Cardiac septum (tissue), 1 donor: ENCODE measurements at regions of chr7 and their contacts with region 1.

Region 1: GRCh38 chr7:149742075-149742701 is 31.2 kb downstream of the ZNF467 start:
- DNase-seq: peak; percentile 87

Region 2: DNA sequence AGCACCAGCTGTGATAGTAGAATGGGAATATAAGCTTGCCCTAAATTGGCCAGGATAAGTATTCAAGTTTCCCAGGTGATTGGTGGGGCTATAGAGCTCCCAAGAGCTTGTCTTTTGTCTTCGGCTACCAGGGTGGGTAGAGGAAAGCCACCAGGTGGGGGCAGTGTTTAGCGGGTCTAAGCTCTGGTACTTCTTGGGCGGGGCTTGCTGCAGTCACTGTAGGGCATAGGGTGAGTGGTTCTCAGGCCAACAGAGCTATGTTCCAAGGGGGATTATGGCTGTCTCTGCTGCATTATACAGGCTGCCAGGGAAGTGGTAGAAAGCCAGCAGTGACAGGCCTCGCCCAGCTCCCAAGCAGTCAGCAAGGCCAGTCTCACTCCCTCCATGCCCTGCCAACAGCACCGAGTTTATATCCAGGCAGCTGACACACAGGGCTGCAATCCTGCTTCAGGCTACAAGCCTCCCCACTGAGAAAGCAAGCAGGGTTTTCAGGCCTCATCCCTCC is 79.5 kb before region 1 on chr7:
- intact Hi-C with region 1: loop called (anchors 5 kb)
- DNase-seq: no peak

Region 3: GRCh38 chr7:149701495-149702240 is 40.5 kb before region 1 on chr7:
- intact Hi-C with region 1: loop called (anchors 2 kb)
- DNase-seq: no peak